ENCODE measurements at regions of chr7 and their contacts with region 1.

Region 1: DNA sequence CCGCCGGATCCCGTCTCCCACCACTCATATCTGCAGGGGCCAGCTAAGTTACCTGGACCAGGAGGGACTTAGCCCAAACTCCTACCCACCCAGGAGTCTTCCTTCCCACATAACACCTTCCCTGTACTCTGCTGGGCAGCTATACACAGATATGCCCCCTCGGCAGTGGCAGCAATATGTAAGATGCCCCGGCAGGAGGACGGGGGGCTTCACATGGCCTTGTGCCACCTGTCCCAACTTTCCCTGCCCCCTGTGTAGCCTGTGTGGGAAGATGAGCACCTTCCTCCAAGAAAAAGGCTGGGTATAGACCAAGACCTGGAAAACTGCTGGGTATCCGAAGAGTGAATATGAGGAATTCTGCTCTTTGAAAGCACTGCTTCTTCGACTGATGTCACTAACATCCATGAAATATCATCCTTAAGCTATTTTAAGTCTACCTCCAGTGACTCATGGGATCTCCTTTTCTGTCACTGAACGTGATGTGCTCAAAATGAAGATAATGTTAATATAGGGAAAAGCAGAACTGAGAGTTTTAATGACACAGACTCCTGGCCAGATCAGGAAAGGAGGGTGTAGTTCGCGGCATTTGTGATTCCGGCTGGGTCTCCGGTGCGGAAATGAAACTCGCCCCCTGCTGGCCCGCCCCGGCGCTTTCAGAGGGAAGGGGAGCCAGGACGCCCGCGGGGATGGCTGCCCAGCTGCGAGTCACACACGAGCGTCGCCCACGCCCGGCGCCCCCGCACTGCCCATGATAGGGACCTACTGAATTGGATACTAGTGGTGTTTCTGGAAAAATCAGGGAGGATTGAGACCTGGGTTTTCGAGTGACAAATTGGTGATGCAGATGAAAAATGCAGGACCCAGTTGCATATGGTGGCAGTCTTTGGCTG is 256.9 kb upstream of the NFE2L3 start:
- DNase-seq: peak; percentile 38 to 80 (median 56)
- ATAC-seq: peak; percentile 54
- H3K4me3 ChIP-seq: peak overlapping the region; percentile 9
- H3K4me3 Mint-ChIP-seq: peak overlapping the region; percentile 49
- H3K27ac ChIP-seq: no peak overlapping the region
- H3K27ac Mint-ChIP-seq: no peak overlapping the region
- H3K4me1 ChIP-seq: peaks cover 25% of the 10 kb centered on the region
- H3K4me1 Mint-ChIP-seq: peaks cover 31% of the 10 kb centered on the region
- H3K27me3 ChIP-seq: no peaks in the 10 kb centered on the region
- H3K27me3 Mint-ChIP-seq: no peaks in the 10 kb centered on the region
- CTCF ChIP-seq: peak; percentile 79

Region 2: DNA sequence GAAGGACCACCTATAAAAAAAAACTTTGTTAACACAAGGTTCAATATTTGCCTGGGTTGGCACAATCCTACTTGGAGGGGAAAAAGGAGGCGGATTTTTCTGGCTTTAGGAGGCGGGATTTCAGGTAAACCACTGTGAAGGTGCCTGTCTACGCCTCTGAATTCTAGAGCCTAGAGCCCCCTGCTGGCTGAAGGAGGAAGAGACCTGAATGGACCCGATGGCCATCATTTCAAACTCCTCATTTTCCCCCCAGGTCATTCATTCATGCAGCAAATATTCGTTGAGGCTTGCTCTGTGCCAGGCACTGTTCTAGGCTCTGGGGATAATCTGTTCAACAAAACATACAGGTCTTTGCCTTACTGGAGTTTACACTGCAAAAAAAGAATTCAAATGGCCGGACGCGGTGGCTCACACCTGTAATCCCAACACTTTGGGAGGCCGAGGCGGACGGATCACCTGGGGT is 166.6 kb after region 1 on chr7:
- CTCF ChIA-PET with region 1: interaction called, 8 read pairs
- POLR2A ChIA-PET with region 1: interaction called, 3 read pairs
- intact Hi-C with region 1: loop called (anchors 1 kb)
- DNase-seq: peak; percentile 50 to 82 (median 64)
- ATAC-seq: peak; percentile 86
- H3K4me3 ChIP-seq: no peak overlapping the region
- H3K4me3 Mint-ChIP-seq: no peak overlapping the region
- H3K27ac ChIP-seq: no peak overlapping the region
- H3K27ac Mint-ChIP-seq: no peak overlapping the region
- H3K4me1 ChIP-seq: peaks cover 5% of the 10 kb centered on the region
- H3K4me1 Mint-ChIP-seq: peaks cover 5% of the 10 kb centered on the region
- H3K27me3 ChIP-seq: peaks cover 0 to 12% of the 10 kb centered on the region in 2 experiments
- H3K27me3 Mint-ChIP-seq: peaks cover 28% of the 10 kb centered on the region
- CTCF ChIP-seq: peak; percentile 87

Region 3: DNA sequence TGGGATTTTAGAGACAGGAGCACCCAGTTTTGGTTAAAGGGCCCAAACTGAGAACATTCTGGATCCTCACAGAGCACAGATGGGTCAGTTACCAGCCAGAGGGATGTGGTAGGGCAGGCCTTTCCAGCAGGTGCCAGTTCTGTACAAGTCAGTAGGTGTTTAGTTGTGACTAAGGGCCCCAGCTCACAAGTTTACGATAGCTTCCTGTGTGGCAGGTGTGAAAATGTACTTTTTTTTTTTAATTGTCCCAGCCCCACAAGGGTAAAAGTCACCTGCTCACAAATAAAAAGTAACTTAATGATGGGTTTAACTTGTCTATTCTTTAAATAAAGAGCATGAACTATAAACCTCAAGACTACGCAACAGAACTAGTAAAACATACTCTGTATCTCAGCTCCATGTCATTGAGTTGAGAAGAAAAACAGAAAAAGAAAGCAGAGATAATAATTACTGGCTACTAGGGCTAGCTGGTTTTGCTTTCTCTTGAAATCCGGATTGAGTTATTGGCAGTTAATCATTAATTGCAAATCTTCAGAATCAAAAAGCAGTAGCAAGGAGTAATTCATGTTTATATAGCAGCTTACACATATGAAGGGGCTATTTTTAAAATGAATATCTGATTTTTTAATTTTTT is 272.3 kb after region 1 on chr7:
- CTCF ChIA-PET with region 1: no interaction called
- POLR2A ChIA-PET with region 1: no interaction called
- intact Hi-C with region 1: no loop called
- DNase-seq: peak in 4 of 14 experiments; percentile 36 to 79 (median 67)
- ATAC-seq: peak; percentile 46
- H3K4me3 ChIP-seq: no peak overlapping the region
- H3K4me3 Mint-ChIP-seq: no peak overlapping the region
- H3K27ac ChIP-seq: peak overlapping the region in 1 of 2 donors; percentile 39
- H3K27ac Mint-ChIP-seq: peak overlapping the region; percentile 30
- H3K4me1 ChIP-seq: peaks cover 20% of the 10 kb centered on the region
- H3K4me1 Mint-ChIP-seq: peaks cover 20% of the 10 kb centered on the region
- H3K27me3 ChIP-seq: no peaks in the 10 kb centered on the region
- H3K27me3 Mint-ChIP-seq: no peaks in the 10 kb centered on the region
- CTCF ChIP-seq: no peak

Region 4: DNA sequence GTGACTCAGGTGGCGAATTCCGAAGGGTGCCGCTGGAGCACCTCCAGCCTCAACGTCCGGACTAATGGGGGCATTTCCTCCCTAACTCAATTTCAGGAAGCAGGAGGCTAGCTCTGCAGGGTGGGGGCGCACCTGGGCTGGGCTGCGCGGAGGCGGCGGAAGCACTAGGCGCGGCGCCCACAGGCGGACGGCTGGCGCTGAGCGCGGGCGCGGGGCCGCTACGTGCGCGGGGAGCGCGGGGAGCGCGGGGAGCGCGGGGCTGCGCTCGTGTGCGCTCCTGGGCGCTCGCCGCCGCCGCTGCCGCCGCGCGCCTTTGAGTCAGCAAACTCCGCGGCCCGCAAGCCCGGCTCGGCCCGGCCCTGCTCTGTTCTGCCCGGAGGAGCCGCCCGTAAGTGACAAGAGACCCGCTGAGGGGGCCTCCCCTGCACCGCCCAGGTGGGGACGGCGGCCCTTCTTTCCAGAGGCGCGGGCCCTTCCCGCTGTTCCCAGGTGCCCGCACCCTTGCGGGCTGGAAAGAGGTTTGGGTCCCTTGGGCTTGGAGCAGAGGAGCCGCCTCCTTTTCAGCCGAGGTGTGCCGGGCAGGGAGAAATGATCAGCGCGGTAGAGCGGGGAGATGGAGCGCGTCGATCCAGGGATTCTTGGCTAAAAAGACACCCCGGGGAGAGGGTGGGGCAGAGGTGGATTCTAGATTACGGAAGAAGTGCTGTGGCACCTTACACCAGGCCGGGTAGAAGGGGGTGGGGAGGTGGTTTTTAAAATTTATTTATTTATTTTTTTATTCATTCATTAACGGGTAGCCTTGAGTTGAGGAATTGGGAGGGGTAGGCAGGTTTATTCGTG is 396.8 kb after region 1 on chr7 and contains the start of gene SNX10:
- CTCF ChIA-PET with region 1: interaction called, 4 read pairs
- POLR2A ChIA-PET with region 1: no interaction called
- intact Hi-C with region 1: loop called (anchors 5 kb)
- DNase-seq: peak; percentile 40 to 91 (median 64)
- ATAC-seq: peak; percentile 82
- H3K4me3 ChIP-seq: peak within 1 kb of the TSS; percentile 89
- H3K4me3 Mint-ChIP-seq: peak within 1 kb of the TSS; percentile 95
- H3K27ac ChIP-seq: peak within 1 kb of the TSS; percentile 46 to 53
- H3K27ac Mint-ChIP-seq: peak within 1 kb of the TSS; percentile 72
- H3K4me1 ChIP-seq: peaks cover 38% of the 10 kb centered on the region
- H3K4me1 Mint-ChIP-seq: peaks cover 37% of the 10 kb centered on the region
- H3K27me3 ChIP-seq: no peaks in the 10 kb centered on the region
- H3K27me3 Mint-ChIP-seq: no peaks in the 10 kb centered on the region
- CTCF ChIP-seq: no peak
- total RNA-seq, gene SNX10: 4.6 to 5.8 TPM

Region 5: DNA sequence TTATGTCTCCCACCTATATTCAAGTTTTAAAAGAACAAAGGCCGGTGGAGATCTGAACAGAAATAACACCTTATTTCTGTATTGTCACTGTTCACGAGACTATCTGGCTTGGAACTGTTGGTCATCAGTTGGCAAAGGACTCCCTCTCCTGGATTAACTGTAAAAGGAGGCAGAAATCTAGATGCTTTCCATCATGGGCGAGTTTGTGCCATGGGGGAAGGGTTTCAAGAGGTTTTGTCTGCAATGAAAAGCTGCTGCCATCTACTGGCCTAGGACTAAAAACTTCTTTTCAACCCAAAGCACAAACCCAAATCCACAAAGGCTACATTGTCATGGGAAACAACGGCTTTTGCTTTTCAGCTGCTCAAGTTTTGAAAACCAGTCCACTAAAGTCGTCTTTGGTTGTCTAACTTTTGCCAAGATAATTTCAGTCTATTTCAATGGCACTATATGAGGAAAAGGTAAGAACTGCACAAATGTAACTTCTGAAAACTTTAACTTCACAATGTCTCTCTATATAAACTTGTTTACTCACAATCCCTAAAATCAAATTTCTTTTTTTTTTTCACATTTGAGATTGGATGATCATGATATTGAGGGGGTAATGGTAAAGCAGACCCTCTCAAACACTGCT is 772.5 kb after region 1 on chr7:
- CTCF ChIA-PET with region 1: interaction called, 3 read pairs
- POLR2A ChIA-PET with region 1: interaction called, 6 read pairs
- intact Hi-C with region 1: loop called (anchors 5 kb)
- DNase-seq: peak in 12 of 14 experiments; percentile 15 to 82 (median 30)
- ATAC-seq: peak; percentile 61
- H3K4me3 ChIP-seq: no peak overlapping the region
- H3K4me3 Mint-ChIP-seq: no peak overlapping the region
- H3K27ac ChIP-seq: no peak overlapping the region
- H3K27ac Mint-ChIP-seq: no peak overlapping the region
- H3K4me1 ChIP-seq: no peaks in the 10 kb centered on the region
- H3K4me1 Mint-ChIP-seq: peaks cover 19% of the 10 kb centered on the region
- H3K27me3 ChIP-seq: no peaks in the 10 kb centered on the region
- H3K27me3 Mint-ChIP-seq: peaks cover 15% of the 10 kb centered on the region
- CTCF ChIP-seq: peak; percentile 75